Caco-2 (cell line): ENCODE measurements at regions of chr4 and their contacts with region 1.

Region 1: GRCh38 chr4:71494539-71494938 is 155.7 kb downstream of the SLC4A4 start:
- DNase-seq: no peak
- H3K4me3 ChIP-seq: no peak overlapping the region
- H3K4me3 Mint-ChIP-seq: no peak overlapping the region
- H3K27ac Mint-ChIP-seq: no peak overlapping the region
- H3K4me1 ChIP-seq: no peaks in the 10 kb centered on the region
- H3K4me1 Mint-ChIP-seq: no peaks in the 10 kb centered on the region
- H3K27me3 ChIP-seq: no peaks in the 10 kb centered on the region
- H3K27me3 Mint-ChIP-seq: peaks cover 6% of the 10 kb centered on the region
- CTCF ChIP-seq: peak in 1 of 2 experiments; percentile 18

Region 2: GRCh38 chr4:71270901-71271300 is 223.6 kb before region 1 on chr4:
- CTCF ChIA-PET with region 1: no interaction called
- POLR2A ChIA-PET with region 1: no interaction called
- intact Hi-C with region 1: loop called (anchors 1 kb)
- DNase-seq: peak; percentile 52
- H3K4me3 ChIP-seq: no peak overlapping the region
- H3K4me3 Mint-ChIP-seq: no peak overlapping the region
- H3K27ac Mint-ChIP-seq: no peak overlapping the region
- H3K4me1 ChIP-seq: no peaks in the 10 kb centered on the region
- H3K4me1 Mint-ChIP-seq: no peaks in the 10 kb centered on the region
- H3K27me3 ChIP-seq: no peaks in the 10 kb centered on the region
- H3K27me3 Mint-ChIP-seq: no peaks in the 10 kb centered on the region
- CTCF ChIP-seq: peak; percentile 47 to 52

Region 3: GRCh38 chr4:71406459-71406963 is 88.0 kb before region 1 on chr4:
- CTCF ChIA-PET with region 1: no interaction called
- POLR2A ChIA-PET with region 1: no interaction called
- intact Hi-C with region 1: no loop called
- DNase-seq: no peak
- H3K4me3 ChIP-seq: no peak overlapping the region
- H3K4me3 Mint-ChIP-seq: no peak overlapping the region
- H3K27ac Mint-ChIP-seq: no peak overlapping the region
- H3K4me1 ChIP-seq: 0 out of 2 replicates have a peak, but pooled peaks cover 5% of the 10 kb centered on the region
- H3K4me1 Mint-ChIP-seq: no peaks in the 10 kb centered on the region
- H3K27me3 ChIP-seq: no peaks in the 10 kb centered on the region
- H3K27me3 Mint-ChIP-seq: no peaks in the 10 kb centered on the region
- CTCF ChIP-seq: no peak